Right ventricle myocardium superior (tissue), 1 donor: ENCODE measurements at regions of chr18 and their contacts with region 1.

Region 1: GRCh38 chr18:9711361-9712129 is 3.4 kb downstream of the RAB31 start:
- DNase-seq: no peak
- ATAC-seq: no peak

Region 2: DNA sequence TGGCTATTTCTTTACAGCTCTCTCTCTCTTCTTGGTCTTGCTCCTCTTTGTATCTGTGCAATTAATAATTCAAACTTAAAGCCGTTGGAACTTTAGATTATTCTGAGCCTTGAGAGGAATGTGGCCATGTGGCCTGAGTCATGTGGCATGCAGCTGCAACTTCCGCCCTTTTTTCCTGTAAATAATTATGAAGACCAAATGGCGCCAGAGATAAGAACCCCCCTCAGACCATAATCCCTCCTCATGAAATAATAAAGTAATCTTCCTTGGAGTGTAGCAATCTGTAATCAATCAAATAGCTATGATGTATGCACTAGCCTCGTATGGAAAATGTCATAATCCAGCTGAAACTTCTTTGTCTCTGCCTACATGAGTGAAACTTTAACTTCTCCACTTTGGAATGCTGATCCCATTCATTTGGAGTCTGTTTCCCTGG is 390.5 kb before region 1 on chr18:
- intact Hi-C with region 1: no loop called
- DNase-seq: no peak
- ATAC-seq: no peak

Region 3: GRCh38 chr18:9334329-9334972 is 377.1 kb before region 1 on chr18 and contains the start of gene TWSG1:
- intact Hi-C with region 1: no loop called
- DNase-seq: peak; percentile 96
- ATAC-seq: peak; percentile 97
- total RNA-seq, gene TWSG1: 8.6 TPM

Region 4: DNA sequence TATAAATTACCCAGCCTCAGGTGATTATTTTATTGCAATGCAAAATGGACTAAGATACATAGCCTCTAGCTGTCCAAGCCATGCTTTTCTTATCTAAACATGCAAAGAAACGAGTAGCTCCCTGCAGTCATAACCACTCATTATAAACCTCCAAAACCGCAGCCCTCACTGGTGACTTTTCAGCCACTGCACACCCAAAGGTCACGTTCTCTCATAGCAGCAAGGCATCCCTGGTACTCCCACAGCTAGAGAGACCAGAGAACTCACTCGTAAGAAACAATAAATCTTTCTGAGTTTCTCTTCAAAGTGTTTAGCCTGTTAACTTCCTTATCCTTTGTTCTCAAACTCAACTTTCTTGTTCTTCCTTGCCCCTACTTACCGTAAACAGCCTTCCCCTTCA is 264.7 kb before region 1 on chr18:
- intact Hi-C with region 1: no loop called
- DNase-seq: no peak
- ATAC-seq: no peak

Region 5: GRCh38 chr18:9653390-9653789 is 58.2 kb before region 1 on chr18:
- intact Hi-C with region 1: loop called (anchors 10 kb)
- DNase-seq: peak; percentile 58
- ATAC-seq: peak; percentile 41

Region 6: DNA sequence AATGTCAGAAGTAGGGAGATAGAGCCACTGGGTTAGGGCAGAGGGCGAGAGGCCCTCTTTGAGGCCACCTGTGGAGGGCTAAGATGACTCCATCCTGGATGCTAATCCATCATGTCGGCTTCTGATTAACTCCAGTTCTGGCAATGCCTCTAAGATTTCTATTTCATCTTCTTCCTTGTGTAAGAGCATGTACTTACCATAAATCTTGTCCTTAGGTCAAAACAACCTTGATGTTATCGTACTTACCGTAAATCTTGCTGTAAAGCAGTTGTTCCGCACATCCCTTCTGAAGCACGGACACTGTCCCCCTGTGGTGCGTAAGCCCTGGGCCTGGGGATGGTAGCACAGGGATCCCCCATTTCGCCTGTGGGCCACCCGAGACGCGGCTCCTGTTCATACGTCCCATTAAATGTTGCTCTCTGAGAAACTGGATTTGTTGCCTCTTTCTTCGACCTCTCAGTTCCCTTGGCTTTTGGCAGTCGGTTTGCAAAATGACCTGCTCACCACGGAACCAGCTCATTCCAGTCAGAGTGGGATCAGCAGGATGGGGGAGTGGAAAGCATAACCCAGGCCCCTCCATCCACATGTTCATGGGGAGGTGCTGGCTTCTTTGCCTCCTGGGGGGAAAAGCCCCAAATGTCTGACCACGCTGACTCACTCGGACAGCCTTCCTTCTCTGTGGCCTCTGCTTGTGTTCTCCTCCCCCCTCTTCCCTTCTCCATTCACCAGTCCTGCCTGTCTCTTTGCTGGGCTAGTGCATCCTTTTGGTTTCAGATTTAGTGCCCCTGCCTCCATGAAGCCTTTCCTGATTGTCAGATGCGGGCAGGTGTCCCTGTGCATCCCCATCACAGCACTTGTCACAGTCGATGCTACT is 46.4 kb after region 1 on chr18:
- intact Hi-C with region 1: no loop called
- DNase-seq: no peak
- ATAC-seq: no peak